ENCODE measurements at regions of chr14 and their contacts with region 1.

Region 1: GRCh38 chr14:92951912-92952471 is 29.0 kb downstream of the CHGA start:
- DNase-seq: peak; percentile 68 to 82 (median 75)
- H3K4me3 ChIP-seq: no peak overlapping the region
- H3K4me3 Mint-ChIP-seq: no peak overlapping the region
- H3K27ac ChIP-seq: no peak overlapping the region
- H3K27ac Mint-ChIP-seq: peak overlapping the region in 2 of 8 donors; percentile 22 to 69
- H3K4me1 ChIP-seq: no peaks in the 10 kb centered on the region
- H3K4me1 Mint-ChIP-seq: peaks cover 5 to 6% (median 6%) of the 10 kb centered on the region in 3 donors
- H3K27me3 ChIP-seq: no peaks in the 10 kb centered on the region
- H3K27me3 Mint-ChIP-seq: no peaks in the 10 kb centered on the region

Region 2: GRCh38 chr14:93137864-93138263 is 185.9 kb after region 1 on chr14:
- CTCF ChIA-PET with region 1: interaction called, 14 read pairs
- POLR2A ChIA-PET with region 1: no interaction called
- DNase-seq: no peak
- H3K4me3 ChIP-seq: no peak overlapping the region
- H3K4me3 Mint-ChIP-seq: no peak overlapping the region
- H3K27ac ChIP-seq: no peak overlapping the region
- H3K27ac Mint-ChIP-seq: no peak overlapping the region
- H3K4me1 ChIP-seq: no peaks in the 10 kb centered on the region
- H3K4me1 Mint-ChIP-seq: peaks cover 2 to 5% (median 5%) of the 10 kb centered on the region in 3 donors
- H3K27me3 ChIP-seq: no peaks in the 10 kb centered on the region
- H3K27me3 Mint-ChIP-seq: no peaks in the 10 kb centered on the region

Region 3: GRCh38 chr14:93146119-93146518 is 194.1 kb after region 1 on chr14:
- CTCF ChIA-PET with region 1: interaction called, 11 read pairs
- POLR2A ChIA-PET with region 1: no interaction called
- DNase-seq: no peak
- H3K4me3 ChIP-seq: no peak overlapping the region
- H3K4me3 Mint-ChIP-seq: no peak overlapping the region
- H3K27ac ChIP-seq: no peak overlapping the region
- H3K27ac Mint-ChIP-seq: no peak overlapping the region
- H3K4me1 ChIP-seq: no peaks in the 10 kb centered on the region
- H3K4me1 Mint-ChIP-seq: peaks cover 0 to 4% (median 0%) of the 10 kb centered on the region in 3 donors
- H3K27me3 ChIP-seq: no peaks in the 10 kb centered on the region
- H3K27me3 Mint-ChIP-seq: peaks cover 6 to 7% of the 10 kb centered on the region in 2 donors